Posterior vena cava (tissue), 2 donors: ENCODE measurements at regions of chr1 and their contacts with region 1.

Region 1: DNA sequence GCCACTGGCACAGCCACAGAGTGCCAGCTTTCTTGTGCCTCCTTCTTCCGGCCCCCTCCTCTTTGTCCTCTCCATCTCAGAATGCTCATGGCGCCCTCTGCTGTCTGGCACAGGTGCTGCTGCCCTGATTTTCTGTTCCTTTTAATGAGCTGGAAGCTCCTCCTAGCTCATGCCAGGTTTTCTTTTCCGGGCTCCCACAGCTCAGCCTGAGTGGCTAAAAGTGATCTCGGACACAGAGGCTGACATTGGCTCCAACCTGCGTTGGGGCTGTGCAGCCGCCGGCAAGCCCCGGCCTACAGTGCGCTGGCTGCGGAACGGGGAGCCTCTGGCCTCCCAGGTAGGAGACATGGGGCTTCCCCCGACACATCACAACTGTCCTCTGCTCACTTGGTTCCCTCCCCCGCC is 18.7 kb downstream of the CNTN2 start:
- DNase-seq: peak; percentile 89

Region 2: DNA sequence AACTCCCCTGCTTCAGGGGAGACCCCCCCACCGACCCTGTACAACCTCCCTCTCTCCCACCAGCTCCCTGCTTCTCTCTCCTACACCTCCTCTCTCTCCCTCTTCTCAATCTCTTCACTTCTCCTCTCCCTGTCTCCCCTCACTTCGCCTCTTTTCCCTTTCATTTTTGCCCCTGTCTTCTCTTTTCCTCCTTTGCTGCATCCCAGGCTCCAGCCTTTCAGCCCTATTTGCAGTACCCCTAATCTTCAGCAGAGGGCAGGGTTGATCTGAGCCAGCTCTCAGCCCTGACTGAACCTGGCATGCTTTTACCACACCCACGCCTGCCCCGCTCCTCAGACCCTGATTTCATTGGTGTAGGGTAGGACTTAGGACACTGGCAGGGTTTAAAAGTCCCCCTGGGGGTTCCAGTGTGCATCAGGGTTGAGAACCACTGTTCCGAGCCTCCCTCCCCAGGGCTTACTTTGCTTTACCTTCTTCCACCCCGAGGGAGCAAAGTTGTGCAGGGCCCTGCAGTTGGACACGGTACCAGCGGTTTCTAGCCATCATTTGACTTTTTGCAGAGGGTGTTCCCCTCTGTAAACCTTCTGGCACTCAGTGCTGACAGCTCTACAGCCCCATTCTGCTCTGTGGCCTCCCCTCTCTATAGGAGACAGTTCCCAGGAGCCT is 86.0 kb before region 1 on chr1:
- intact Hi-C with region 1: loop called in 1 of 2 experiments (anchors 5 kb)
- DNase-seq: no peak

Region 3: DNA sequence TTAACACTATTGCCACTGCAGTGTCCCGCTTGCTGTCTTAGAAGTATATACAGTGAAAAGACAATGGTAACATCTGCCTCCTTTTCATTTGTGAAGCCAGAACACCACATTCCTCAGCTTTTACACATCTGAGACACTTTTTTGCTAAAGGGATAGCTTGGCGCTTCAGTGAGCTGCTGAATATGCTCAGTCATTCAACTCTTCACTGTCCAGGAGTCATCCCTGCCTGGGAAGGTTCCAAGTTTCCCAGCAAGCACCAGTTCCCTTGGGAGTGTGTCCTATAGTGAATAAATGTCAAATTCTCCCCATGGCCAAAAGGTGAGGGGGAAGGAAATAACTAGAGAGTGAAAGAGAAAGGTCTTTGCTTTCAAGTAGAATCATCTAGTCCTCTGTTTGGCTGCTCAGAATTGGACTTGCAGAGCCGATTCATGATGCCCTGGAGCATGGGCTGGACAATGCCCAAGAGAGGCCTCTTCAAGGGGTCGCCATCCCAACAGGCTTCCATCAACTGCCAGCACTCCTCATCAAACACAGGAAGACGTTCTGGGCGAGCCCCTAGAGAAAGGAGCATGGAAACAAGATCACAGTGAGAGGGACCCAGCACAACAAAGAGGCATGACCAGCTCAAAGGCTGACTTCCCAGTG is 85.6 kb after region 1 on chr1:
- intact Hi-C with region 1: no loop called
- DNase-seq: no peak